BJ (cell line): ENCODE measurements at regions of chr4 and their contacts with region 1.

Region 1: DNA sequence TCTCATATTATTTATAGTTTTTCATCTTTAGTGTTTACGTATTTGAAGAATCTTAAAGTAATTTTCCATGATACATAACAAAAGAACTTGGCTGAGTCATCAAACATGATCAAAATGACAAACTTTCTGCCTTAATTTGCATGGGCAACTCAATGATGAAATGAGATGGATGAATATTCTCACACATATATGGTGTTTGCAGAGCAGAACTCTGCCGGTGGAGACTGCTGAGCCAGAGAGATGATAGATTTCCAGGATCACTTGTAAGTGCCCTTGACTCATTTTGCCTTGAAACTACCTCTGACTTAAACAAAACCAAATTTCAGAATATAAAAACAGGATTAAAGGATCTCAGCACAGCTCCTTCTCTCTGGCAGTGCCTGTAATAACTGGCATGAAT is 38.2 kb downstream of the TRPC3 start:
- DNase-seq: no peak
- H3K4me3 ChIP-seq: no peak overlapping the region
- H3K27me3 ChIP-seq: no peaks in the 10 kb centered on the region
- CTCF ChIP-seq: no peak

Region 2: DNA sequence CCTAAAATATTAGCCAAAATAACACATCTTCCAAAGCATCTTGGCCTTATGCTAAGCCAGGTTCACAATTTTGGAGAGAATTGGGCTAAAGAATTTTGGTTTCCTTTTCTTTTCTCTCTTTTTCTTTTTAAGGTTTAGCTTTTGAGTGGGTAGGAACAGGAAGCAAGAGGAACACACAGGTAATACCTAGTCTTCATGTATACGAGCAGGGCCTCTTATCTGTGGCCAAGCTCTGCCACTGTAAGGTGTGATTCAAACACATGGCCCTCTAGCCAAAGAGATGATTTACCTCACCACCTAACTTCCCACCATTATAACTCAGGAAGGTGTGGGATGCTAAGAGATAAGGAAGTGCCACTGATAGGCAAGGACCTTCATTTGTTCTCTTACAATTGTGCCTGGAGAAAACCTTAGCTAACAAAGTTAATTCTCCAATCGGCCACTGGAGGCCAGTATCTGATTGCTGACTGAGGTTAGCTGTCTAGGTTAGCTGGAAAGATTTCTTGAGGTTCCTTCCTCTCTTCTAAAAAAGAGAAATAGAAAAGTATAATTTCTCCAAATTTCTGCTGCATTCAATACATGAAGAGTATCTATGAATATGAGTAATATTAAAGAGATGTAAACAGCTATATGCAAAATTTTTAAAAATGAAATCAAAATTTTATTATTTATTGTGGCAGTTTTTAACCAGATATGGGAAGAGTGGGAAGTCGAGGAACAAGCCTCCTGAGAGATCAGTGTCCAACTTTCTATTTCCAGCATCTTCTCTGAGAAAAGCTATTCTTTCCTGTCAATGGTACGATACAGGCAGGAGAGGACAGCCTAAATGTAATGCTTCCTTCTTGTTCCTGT is 13.3 kb before region 1 on chr4:
- CTCF ChIA-PET with region 1: interaction called, 14 read pairs
- POLR2A ChIA-PET with region 1: no interaction called
- DNase-seq: peak; percentile 10
- H3K4me3 ChIP-seq: no peak overlapping the region
- H3K27me3 ChIP-seq: no peaks in the 10 kb centered on the region
- CTCF ChIP-seq: peak; percentile 78

Region 3: GRCh38 chr4:121952290-121952689 is 38.6 kb after region 1 on chr4:
- CTCF ChIA-PET with region 1: no interaction called
- POLR2A ChIA-PET with region 1: no interaction called
- DNase-seq: no peak
- H3K4me3 ChIP-seq: peak overlapping the region; percentile 59
- H3K27me3 ChIP-seq: no peaks in the 10 kb centered on the region
- CTCF ChIP-seq: no peak

Region 4: DNA sequence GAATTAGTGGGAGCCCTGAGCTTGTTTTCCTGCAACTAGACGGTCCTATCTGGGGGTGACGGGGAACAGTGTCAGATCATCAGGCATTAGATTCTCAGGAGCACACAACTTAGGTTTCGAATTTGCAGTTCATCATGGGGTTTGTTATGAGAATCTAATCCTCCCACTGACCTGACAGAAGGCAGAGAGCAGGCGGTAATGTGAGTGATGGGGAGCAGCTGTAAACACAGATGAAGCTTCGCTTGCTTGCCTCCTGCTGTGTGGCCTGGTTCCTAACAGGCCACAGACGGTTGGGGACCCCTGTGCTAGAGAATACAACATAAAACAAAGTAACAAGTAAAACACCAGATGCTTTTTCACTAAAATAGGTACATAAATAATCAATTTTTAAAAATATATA is 152.2 kb after region 1 on chr4:
- CTCF ChIA-PET with region 1: no interaction called
- POLR2A ChIA-PET with region 1: no interaction called
- DNase-seq: no peak
- H3K4me3 ChIP-seq: no peak overlapping the region
- H3K27me3 ChIP-seq: no peaks in the 10 kb centered on the region
- CTCF ChIP-seq: no peak